ENCODE measurements at regions of chr2 and their contacts with region 1.

Region 1: GRCh38 chr2:46351750-46352138 is 54.5 kb downstream of the EPAS1 start:
- DNase-seq: peak; percentile 74
- ATAC-seq: peak; percentile 51

Region 2: GRCh38 chr2:46062637-46063412 is 288.9 kb before region 1 on chr2:
- intact Hi-C with region 1: no loop called
- DNase-seq: peak; percentile 75
- ATAC-seq: peak; percentile 82

Region 3: DNA sequence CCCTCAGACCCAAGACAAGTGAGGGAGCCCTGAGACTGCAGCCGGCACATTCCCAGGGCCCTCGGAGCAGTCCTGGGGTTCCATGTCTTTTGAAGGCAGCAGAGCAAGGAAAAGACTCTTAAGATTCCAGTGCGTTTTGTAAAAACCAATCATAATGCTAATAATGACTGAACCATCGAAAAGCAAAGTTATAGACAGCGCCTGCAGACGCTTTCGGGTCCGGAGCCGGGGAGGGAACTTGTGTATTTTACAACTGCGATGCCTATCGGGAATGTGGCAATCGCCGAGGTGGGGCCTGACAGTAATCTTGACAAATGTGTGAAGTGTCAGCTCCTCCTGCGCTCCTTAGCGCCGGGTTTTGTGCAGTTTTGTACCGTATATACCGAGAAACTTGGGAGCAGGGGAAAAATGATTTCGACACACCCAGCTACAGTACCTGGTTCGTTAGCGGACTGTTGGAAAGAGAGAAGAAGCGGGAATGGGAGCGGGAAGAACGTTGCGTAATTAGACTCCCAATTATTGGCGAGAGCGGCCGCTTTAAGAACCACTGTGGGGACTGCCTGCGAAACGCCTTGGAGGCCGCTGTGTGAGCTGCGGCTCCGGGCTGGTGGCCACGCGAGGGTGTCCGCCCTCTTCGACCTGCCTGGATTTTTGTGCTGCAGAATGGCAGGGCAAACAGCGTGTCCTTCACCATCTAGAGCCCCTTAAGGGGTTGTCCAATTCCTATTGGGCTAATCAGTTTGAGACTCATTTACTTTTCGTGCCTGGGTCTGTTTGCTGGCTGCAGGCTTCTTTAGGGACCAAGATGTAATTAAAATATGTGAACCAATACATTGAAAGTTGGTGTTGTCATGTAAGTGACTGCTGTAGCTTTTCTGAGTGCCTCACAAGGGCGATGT is 52.1 kb before region 1 on chr2:
- intact Hi-C with region 1: loop called (anchors 10 kb)
- DNase-seq: peak; percentile 84
- ATAC-seq: peak; percentile 50

Region 4: DNA sequence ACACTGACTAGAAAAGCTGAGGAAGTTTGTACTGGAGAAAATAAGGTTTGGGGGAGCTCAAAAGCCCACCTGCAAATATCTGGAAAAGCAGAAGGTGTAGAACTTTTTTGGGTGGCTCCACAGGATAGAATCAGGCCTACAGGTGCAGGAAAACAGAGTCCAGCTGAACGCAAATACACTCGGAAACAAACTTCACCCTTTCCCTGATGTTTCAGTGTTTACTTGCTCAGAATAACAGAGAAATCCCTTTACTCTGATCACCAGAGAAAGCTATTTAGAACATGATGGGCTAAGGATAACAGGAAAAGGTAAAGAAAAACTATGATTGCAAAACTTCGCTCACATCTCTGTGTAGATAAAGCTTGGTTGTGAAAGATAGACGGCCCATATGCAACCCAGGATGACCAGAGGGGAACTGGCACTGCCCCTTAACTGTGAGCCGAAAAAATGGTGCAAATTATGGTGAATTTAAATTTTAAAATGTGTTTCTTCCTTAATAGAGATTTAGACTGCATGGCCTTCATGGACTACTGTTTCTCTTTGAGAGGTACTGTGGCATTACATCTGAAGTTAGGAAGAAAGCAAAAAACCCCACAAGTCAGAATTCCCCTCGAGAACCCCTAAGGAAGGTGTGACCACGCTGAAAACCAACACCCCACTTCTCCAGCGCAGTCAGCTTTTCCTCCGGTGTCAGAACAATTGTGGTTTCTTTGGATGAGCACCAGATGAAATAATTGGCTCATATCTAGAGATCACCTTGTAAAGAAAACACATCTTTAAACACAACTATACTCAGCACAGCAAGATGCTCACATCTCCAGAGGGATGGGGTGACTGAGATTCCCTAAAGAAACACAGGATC is 43.1 kb after region 1 on chr2:
- intact Hi-C with region 1: no loop called
- DNase-seq: no peak
- ATAC-seq: no peak

Region 5: DNA sequence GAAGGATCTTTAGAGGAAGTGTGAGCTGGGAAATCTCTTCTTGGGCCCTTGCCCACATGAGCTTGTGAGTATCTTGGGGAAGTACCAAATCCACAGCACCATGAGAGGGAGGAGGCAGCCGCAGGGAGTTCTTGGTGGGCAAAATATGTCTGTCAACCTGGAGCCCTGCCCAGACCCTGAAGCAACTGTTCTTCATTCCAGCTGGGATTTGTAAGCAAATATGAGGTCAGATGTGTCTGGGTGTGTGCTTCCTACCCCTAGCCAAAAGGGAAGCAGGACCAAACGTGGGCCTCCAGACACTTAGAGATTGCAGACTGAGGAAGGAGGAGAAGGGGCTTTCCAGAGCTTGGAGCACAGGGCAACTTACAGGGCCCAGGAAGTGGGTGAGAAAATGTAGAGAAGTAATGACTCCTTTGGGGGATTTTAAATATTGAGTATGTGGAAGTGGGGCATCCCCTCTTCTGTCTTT is 169.5 kb after region 1 on chr2:
- intact Hi-C with region 1: no loop called
- DNase-seq: peak; percentile 80
- ATAC-seq: peak; percentile 86

Region 6: DNA sequence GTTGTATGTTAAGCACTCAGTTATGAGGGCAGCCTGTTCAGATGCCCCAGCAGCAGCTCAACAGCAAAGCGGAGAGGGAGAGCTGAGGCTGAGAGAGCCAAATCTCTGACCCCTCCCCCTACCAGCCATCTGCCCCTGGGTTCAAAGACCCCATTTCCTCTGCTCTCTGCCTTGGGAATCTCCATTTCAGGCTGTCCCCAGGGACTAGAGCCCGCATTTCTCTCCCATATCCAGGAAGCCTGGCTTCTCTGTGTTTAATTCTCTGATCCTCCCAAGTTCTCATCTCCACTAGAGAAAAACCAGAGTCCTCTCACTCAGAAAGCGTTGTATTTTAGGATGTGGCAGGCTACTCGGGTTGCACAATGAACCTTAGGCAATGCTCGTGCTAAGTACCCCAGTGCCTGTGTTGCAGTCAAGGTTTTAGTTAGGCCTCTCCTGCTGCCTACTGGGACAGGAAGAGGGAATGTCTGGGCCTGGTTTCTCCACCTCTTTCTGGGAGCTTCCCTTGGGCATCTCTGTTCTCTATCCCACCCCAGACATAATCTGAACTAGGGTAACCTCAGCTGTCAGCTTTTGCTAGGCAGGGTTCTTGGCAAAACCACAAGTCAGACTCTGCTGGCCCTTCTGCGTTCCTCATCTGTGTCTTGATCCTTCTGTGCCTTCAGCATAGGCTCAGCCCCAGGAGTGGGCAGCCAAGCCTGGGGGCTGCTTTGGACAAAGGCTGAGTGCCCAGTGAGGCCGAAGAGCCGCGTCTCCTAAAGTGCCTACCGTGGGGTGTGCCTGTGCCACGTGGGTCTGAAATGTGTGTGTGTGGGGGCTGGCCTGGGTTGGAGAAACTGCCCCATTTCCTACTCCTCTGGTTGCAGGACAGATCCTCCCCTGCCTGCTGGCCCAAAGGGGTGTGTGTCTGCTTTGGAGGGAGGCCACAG is 706.5 kb after region 1 on chr2:
- intact Hi-C with region 1: no loop called
- DNase-seq: peak; percentile 48
- ATAC-seq: peak; percentile 68